HEK293T (cell line): ENCODE measurements at regions of chr12 and their contacts with region 1.

Region 1: GRCh38 chr12:53984901-53985709 is at the start of gene HOXC10:
- DNase-seq: peak; percentile 85

Region 2: GRCh38 chr12:53476769-53477209 is 508.3 kb before region 1 on chr12:
- CTCF ChIA-PET with region 1: no interaction called
- POLR2A ChIA-PET with region 1: no interaction called
- DNase-seq: peak; percentile 34

Region 3: DNA sequence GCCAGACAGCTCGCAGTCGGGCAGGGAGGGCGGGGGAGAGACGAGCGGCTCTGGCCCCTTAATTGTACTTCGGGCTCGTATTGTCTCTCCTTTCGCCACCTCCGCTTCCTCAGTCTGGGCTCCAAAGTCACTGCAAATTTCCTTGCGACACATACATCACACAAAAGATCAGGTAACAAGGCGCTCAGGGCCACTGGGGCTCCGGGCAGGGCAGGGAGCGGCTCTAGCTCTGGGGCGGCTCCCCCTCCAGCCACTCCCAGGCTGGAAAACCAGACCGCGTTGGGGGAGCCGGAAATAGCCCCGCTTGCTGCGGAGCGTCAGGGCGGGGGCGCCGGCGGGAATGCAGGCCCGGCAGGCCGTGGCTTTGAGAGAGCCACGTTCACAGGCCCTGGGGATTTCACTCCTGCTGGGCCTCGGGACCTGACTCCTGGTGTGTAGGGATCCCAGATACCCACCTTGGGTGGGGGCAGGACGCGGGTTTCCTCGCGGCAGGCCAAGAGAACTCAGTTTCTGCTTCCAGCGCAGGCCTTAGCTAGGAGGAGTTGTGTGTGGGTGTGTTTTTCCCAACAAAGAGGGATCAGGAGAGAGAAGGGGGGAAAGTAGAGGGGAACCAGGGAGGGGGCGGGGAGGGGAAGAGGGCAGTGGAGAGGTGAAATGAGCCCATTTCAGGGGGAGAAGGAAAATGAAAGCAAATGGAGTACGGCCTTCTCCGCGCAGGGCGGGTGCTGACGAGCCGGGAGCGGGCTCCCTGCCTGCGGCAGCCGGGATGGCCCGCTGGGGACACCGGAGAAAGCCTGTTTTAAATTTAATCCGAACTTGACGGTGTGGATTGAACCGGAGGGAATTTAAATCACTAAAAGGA is 10.5 kb after region 1 on chr12:
- CTCF ChIA-PET with region 1: interaction called, 27 read pairs
- POLR2A ChIA-PET with region 1: interaction called, 69 read pairs
- DNase-seq: no peak

Region 4: DNA sequence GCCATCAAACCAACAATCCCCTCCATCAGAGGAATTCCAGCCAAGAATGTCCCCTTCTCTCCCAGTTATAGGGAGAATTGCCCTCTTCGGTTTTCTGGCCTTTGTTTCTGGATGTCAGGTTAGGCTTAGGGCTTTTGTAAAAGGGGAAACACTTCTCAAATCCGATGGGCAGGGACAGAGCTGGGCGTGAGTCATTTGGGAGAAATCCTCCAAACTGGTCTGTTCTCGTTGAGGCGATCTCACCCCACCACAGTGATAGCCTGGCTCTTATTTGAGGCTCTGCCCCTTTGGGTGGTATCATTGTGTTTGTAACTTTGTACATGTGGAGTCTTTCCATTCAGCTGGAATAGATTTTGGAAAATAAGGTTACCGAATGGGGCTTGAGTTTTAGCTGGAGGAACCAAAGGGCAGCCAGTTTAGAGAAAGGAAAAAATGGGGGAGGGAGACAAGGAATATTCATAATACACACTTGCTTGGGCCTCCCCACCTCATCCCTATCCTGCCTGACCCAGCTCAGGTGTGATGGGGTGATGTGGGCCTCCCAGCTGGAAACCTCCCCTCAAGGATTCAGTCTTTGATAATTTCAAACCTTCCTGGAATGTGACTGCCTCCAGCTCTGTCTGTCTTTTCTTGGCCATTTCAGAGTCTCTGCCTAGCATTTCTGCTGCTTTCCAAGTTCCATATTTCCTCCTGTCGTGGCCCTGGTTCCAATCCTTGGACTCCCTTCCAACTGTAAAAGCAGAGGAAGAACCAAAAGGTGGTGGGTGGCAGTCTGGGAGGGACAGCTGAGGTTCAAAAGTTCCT is 76.1 kb after region 1 on chr12:
- CTCF ChIA-PET with region 1: no interaction called
- POLR2A ChIA-PET with region 1: no interaction called
- DNase-seq: no peak

Region 5: DNA sequence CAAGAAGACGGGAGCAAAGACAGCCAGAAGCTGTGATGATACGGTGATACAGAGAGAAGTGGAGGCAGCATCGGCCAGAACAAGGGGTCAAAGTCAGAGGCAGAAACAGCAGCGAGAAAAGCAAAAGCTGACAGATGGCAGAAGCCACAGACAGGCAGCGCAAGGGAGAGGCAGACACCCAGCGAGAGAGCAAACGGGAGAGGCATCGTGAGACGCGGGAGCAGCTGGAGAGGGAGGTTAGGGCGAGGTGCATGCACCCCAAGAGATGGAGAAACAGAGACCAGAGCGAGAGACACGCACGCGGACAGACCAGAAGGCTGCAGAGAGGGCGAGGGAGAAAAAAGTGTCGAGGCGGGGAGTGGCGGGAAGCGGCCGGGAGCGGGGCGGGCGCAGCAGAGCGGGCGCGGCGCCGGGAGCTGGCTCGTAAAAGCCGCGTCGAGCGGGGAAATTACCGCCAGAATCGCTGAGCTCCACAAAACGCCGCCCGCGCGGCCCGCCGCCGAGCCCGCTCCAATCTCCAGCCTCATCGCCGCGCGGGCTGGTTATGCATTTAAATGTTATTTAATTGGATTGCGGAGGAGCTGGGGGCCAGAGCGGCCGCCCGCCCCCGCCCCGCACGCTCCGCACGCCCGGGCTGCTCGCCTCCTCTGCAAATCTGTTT is 188.1 kb after region 1 on chr12:
- CTCF ChIA-PET with region 1: no interaction called
- POLR2A ChIA-PET with region 1: no interaction called
- DNase-seq: peak; percentile 64

Region 6: GRCh38 chr12:54201001-54201794 is 216.1 kb after region 1 on chr12:
- CTCF ChIA-PET with region 1: interaction called, 44 read pairs
- POLR2A ChIA-PET with region 1: interaction called, 3 read pairs
- DNase-seq: peak; percentile 82

Region 7: DNA sequence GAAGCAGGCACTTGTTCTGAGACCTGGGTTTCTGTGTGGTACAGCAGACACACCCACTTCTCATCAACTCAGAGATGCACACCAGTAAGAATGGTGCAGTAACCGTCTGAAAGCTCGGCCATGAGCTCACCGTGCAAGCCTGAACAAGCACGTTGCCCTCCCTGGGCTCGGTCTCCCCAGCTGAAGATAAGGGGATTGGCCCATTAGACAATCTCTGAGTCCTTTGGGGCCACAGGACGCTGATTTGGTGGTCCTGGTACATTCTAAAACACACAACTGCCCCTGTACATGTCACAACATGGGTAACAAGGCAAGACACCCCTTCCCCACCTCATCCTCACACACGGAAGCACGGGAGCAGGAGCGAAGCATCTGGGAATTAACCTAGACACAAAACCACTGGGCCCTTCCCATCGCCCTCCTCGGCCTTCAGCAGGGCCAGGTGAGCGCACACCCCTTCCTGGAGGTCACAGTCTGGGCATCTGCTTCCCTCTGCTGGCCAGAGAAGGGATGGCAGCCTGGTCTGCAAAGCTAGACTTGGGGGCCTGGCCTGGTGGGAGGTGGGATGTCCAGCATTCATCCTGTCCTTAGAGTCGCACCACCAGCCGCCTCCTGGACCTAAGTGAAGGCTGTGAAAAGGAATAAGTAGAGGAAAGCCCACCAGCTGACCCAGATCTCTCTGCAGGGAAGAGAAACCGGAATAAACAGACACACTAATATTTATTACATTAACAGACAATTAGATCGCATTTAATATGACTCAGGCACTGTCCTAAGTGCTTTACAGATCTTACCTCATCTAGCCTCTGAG is 222.6 kb after region 1 on chr12:
- CTCF ChIA-PET with region 1: interaction called, 44 read pairs
- POLR2A ChIA-PET with region 1: interaction called, 6 read pairs
- DNase-seq: peak; percentile 77

Region 8: GRCh38 chr12:54214553-54215406 is 229.7 kb after region 1 on chr12:
- CTCF ChIA-PET with region 1: interaction called, 44 read pairs
- POLR2A ChIA-PET with region 1: interaction called, 3 read pairs
- DNase-seq: peak; percentile 89

Region 9: DNA sequence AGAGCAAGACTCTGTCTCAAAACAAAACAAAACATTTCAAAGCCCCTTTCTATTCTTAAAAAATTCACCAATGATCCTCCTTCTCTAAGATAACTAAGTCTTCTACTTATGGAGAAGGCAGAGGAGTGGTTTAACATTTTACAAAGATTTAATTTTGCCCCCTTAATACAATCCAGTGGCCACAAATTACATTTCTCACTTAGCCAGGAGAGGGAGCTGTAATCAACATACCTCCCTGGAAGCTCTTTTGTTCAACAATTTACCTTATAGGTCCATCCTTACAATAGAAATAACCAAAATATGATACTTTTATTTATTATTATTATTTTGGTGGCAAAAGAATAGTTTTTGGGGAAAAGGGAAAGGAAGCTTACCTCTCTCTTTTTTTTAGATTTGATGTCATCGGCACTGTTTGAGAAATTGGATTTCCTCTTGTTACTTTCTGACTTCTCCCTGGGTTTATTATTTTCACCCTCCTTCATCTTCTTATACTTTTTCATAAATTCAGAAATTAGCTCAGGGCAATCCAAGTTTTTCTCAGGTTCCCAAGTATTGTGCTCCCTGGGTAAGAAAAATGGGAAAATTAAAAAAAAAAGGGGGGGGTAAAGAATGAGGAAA is 266.7 kb after region 1 on chr12:
- CTCF ChIA-PET with region 1: no interaction called
- POLR2A ChIA-PET with region 1: no interaction called
- DNase-seq: peak; percentile 49